PC-3 (cell line): ENCODE measurements at regions of chr11 and their contacts with region 1.

Region 1: DNA sequence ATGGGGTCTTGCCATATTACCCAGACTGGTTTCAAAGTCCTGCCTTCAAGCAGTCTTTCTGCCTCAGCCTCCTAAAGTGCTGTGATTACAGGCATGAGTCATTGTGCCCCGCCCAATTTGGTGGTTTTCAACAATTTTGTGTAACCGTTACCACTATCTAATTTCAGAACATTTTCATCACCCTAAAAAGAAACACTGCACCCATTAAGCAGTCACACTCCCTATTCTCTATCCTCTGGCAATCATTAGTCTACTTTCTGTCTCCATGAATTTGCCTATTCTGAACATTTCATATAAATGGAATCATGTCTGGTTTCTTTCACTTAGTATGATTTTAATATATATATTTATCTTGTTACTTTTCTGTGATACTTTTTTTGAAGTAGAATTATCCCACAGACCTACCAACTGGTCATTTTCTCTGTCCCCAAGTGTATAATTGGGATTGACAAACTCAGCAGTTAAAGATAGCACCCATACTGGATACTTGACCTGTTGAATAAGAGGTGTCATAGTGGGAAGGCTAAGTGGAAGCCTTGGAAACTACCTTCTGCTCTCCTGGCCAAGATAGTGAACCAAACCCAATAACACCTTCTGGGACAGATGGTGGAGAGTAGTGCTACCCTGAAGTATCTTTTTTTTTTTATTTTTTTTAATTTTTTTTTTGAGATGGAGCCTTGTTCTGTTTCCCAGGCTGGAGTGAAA is 64.8 kb downstream of the STIM1 start:
- DNase-seq: peak; percentile 71
- ATAC-seq: peak; percentile 77
- H3K4me3 ChIP-seq: no peak overlapping the region
- H3K27ac ChIP-seq: peak overlapping the region; percentile 60; the same call in 1 of the 2 replicates
- H3K4me1 ChIP-seq: peaks cover 11% of the 10 kb centered on the region
- H3K27me3 ChIP-seq: no peaks in the 10 kb centered on the region
- CTCF ChIP-seq: no peak

Region 2: DNA sequence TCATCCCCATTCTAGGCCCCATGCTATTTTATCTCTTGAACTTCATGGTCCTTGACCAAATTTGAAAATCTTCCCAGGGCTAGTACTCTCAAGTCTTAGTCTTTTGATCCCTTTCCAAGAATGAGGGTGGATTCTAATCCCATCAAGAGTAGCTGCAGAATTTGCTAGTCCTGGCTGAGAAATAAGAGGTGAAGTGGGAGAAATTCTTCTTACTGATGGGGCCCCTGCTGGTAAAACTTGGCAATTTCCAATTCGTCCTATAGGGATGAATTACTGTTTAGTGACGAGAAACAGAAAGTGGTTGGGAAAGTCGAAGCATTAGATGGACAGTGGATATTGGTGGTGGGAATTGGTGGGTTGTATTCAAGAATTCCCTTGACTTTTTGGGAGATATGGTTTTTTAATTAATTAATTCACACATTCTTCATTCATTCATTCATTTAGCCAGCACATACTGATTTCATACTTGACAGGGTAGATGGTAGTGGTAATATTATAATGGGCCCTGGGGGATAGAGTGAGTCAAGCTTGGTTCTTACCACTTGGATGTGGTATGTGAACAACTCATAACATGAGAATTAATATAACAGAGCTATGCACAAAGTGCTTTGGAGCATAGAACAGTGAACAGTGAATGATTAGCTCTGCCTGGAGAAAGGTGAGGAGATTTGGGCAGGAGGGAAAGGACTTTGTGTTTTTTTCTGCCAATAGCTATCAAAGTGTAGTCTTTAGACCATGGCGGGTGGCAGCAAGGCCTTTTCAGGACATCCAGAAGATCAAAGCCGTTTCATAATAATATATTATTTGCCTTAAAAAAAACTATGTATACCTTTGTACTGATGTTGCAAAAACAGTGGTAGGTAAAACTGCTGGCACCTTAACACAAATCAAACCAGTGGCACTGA is 39.0 kb after region 1 on chr11:
- CTCF ChIA-PET with region 1: no interaction called
- POLR2A ChIA-PET with region 1: no interaction called
- intact Hi-C with region 1: loop called (anchors 5 kb)
- DNase-seq: peak; percentile 60
- ATAC-seq: peak; percentile 33
- H3K4me3 ChIP-seq: no peak overlapping the region
- H3K27ac ChIP-seq: no peak overlapping the region
- H3K4me1 ChIP-seq: peaks cover 31% of the 10 kb centered on the region
- H3K27me3 ChIP-seq: no peaks in the 10 kb centered on the region
- CTCF ChIP-seq: peak; percentile 61

Region 3: DNA sequence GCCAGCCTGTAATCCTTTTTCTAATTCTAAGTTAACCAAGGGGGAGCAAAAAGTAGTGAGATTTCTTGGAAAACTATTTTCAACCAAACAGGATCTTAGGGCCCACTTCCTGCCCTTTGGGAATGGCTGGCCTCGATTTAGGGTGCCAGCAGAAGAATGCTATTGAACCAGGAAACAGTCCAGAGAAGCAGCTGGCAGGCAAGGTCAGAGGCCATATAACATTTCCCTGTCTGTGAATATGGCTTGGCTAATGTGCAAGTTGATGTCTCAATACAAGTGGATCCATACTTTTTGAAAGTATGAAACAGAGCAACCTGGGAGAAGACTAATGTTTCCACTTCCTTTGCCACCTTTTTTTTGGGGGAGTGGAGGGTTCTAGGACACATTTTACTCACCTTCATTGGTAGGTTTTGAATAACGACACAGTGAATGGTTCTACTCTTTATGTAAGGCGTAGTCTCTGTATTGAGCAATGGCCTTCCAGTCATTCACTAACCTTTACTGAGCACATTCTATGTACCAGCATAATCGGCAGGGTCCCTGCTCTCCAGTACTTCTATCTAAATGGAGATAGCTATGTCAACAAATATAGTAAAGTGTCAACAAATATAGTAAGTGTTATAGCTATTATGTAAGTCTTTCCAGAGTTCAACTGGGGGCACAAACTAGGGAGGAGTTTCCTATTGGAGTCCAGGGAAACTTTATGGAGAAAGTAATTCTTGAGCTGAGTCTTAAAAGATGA is 140.1 kb after region 1 on chr11:
- CTCF ChIA-PET with region 1: no interaction called
- POLR2A ChIA-PET with region 1: no interaction called
- intact Hi-C with region 1: no loop called
- DNase-seq: no peak
- ATAC-seq: no peak
- H3K4me3 ChIP-seq: no peak overlapping the region
- H3K27ac ChIP-seq: no peak overlapping the region
- H3K4me1 ChIP-seq: peaks cover 17% of the 10 kb centered on the region
- H3K27me3 ChIP-seq: no peaks in the 10 kb centered on the region
- CTCF ChIP-seq: no peak